PC-3 (cell line): ENCODE measurements at regions of chr15 and their contacts with region 1.

Region 1: GRCh38 chr15:28123408-28124023 is 24.4 kb upstream of the OCA2 start:
- DNase-seq: peak; percentile 85
- ATAC-seq: peak; percentile 95
- H3K4me3 ChIP-seq: no peak overlapping the region
- H3K27ac ChIP-seq: no peak overlapping the region
- H3K4me1 ChIP-seq: no peaks in the 10 kb centered on the region
- H3K27me3 ChIP-seq: no peaks in the 10 kb centered on the region
- CTCF ChIP-seq: peak; percentile 84

Region 2: DNA sequence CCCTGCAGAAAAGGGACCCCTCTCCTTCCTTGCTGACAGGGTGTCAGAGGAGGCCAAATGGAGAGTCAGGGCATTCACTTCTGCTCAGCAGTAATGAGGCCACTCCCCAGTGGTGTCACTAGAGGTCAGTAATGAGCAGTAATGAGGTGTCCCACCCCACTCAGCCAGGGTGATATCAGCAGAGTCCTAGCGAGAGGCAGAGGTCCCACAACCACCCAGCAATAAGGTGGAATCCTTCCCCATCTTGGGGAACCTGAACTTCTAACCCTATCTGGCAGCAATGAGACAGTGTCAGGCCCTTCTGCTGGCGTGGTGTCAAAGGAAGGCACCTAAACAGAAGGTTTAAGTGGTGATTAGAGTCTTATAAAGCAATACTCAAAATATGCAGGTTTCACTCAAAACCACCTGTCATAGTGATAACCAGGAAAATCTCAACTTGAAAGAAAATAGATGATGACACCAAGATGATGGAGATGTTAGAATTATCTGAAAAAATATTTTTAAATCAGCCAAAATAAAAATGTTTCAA is 37.3 kb before region 1 on chr15:
- CTCF ChIA-PET with region 1: no interaction called
- POLR2A ChIA-PET with region 1: no interaction called
- intact Hi-C with region 1: loop called (anchors 1 kb)
- DNase-seq: peak; percentile 70
- ATAC-seq: peak; percentile 100
- H3K4me3 ChIP-seq: no peak overlapping the region
- H3K27ac ChIP-seq: no peak overlapping the region
- H3K4me1 ChIP-seq: no peaks in the 10 kb centered on the region
- H3K27me3 ChIP-seq: no peaks in the 10 kb centered on the region
- CTCF ChIP-seq: peak; percentile 74